Caco-2 (cell line): ENCODE measurements at regions of chr6 and their contacts with region 1.

Region 1: DNA sequence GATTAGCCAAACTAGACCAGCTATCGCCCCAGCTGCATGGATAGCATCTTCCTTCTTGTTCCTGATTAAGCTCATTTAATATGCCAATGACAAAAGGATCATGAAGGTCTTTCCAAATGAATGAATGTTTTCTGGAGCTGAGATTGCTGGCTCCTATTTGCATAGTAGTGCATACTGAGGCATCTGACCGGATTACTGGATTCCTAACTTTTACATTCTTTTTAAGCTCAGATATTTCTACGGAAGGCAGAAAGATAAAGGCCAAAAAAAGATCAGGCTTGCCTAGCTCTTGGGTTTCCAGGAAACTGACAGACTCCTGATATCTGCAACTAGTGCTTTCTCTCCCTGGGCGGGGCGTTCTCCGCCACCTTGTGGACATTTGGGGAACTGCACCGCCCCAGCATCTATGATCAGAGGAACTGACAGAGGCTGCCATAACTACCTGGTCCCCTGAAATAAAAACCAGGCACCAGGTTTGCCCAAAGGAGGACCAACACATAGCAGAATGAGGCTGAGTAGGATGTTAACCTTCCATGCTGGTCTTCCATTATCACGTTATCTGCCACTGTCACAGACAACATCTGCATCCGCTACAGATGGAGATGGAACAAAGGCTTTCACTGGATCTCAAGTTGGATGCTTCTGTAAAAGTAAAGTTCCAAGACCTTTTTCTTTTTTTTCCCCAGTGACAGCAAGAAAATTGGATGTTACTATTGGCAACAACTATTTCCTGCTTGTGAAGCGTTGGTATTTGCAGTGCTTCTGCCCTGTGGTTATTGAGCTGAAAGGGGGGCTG is 33.2 kb downstream of the NT5E start:
- DNase-seq: peak; percentile 68 to 84
- H3K4me3 ChIP-seq: no peak overlapping the region
- H3K4me3 Mint-ChIP-seq: no peak overlapping the region
- H3K27ac Mint-ChIP-seq: no peak overlapping the region
- H3K4me1 ChIP-seq: peaks cover 3% of the 10 kb centered on the region; the same call in 1 of the 2 replicates
- H3K4me1 Mint-ChIP-seq: peaks cover 7% of the 10 kb centered on the region
- H3K27me3 ChIP-seq: no peaks in the 10 kb centered on the region
- H3K27me3 Mint-ChIP-seq: no peaks in the 10 kb centered on the region
- CTCF ChIP-seq: peak; percentile 98

Region 2: DNA sequence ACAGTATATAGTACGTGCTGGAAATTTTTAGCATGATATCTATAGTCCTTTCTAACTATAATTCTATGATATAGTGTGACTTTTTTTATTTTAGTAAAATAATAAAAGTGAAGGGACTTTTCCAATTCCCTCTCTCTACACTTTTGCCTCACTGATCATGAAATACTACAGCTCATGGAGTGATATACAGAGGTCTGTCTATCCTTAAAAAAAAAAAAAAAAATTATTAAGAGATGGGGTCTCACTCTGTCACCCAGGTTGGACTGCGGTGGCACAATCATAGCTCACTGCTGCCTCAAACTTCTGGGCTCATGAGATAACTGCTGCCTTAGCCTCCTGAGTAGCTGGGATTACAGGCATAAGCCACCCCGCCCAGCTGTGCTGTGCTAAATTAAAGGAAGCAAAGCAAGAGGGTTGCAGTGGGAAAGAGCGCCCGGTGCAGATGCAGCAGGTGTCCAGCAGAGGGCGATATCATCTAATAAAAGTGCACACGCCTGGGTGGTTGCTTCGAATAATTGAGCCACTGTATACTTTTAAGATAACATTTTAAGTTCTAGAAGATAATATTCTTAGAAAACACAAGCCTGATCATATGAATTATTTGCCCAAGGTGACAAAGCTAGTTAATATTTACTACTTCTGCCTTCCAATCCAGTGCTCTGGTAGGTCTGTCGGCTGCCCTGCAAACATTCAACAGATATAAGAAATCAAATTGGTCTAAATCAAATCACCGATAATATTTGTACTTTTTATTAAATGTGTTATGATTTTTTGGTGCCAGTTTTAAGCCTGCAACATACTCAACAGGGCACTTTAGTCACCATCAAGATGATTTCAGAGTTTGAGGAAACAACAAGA is 128.1 kb before region 1 on chr6:
- CTCF ChIA-PET with region 1: interaction called, 28 read pairs
- POLR2A ChIA-PET with region 1: no interaction called
- intact Hi-C with region 1: loop called (anchors 1 kb)
- DNase-seq: peak; percentile 62 to 74
- H3K4me3 ChIP-seq: no peak overlapping the region
- H3K4me3 Mint-ChIP-seq: no peak overlapping the region
- H3K27ac Mint-ChIP-seq: no peak overlapping the region
- H3K4me1 ChIP-seq: no peaks in the 10 kb centered on the region
- H3K4me1 Mint-ChIP-seq: no peaks in the 10 kb centered on the region
- H3K27me3 ChIP-seq: no peaks in the 10 kb centered on the region
- H3K27me3 Mint-ChIP-seq: no peaks in the 10 kb centered on the region
- CTCF ChIP-seq: peak; percentile 91 to 93

Region 3: GRCh38 chr6:85372188-85372914 is 110.8 kb before region 1 on chr6:
- CTCF ChIA-PET with region 1: interaction called, 3 read pairs
- POLR2A ChIA-PET with region 1: no interaction called
- intact Hi-C with region 1: loop called (anchors 1 kb)
- DNase-seq: no peak
- H3K4me3 ChIP-seq: no peak overlapping the region
- H3K4me3 Mint-ChIP-seq: no peak overlapping the region
- H3K27ac Mint-ChIP-seq: no peak overlapping the region
- H3K4me1 ChIP-seq: no peaks in the 10 kb centered on the region
- H3K4me1 Mint-ChIP-seq: no peaks in the 10 kb centered on the region
- H3K27me3 ChIP-seq: no peaks in the 10 kb centered on the region
- H3K27me3 Mint-ChIP-seq: no peaks in the 10 kb centered on the region
- CTCF ChIP-seq: peak in 1 of 2 experiments; percentile 30

Region 4: GRCh38 chr6:85404502-85405174 is 78.5 kb before region 1 on chr6:
- CTCF ChIA-PET with region 1: interaction called, 12 read pairs
- POLR2A ChIA-PET with region 1: no interaction called
- intact Hi-C with region 1: loop called (anchors 5 kb)
- DNase-seq: peak in 1 of 2 experiments; percentile 17
- H3K4me3 ChIP-seq: no peak overlapping the region
- H3K4me3 Mint-ChIP-seq: peak overlapping the region; percentile 68
- H3K27ac Mint-ChIP-seq: peak overlapping the region; percentile 95
- H3K4me1 ChIP-seq: peaks cover 54% of the 10 kb centered on the region
- H3K4me1 Mint-ChIP-seq: peaks cover 47% of the 10 kb centered on the region
- H3K27me3 ChIP-seq: no peaks in the 10 kb centered on the region
- H3K27me3 Mint-ChIP-seq: no peaks in the 10 kb centered on the region
- CTCF ChIP-seq: no peak

Region 5: GRCh38 chr6:85449818-85450759 is 33.0 kb before region 1 on chr6 and contains the start of gene NT5E:
- CTCF ChIA-PET with region 1: interaction called, 12 read pairs
- POLR2A ChIA-PET with region 1: no interaction called
- intact Hi-C with region 1: no loop called
- DNase-seq: peak; percentile 53 to 71
- H3K4me3 ChIP-seq: peak within 1 kb of the TSS; percentile 61
- H3K4me3 Mint-ChIP-seq: peak within 1 kb of the TSS; percentile 85
- H3K27ac Mint-ChIP-seq: no peak within 1 kb of the TSS
- H3K4me1 ChIP-seq: no peaks in the 10 kb centered on the region
- H3K4me1 Mint-ChIP-seq: peaks cover 17% of the 10 kb centered on the region
- H3K27me3 ChIP-seq: no peaks in the 10 kb centered on the region
- H3K27me3 Mint-ChIP-seq: peaks cover 7% of the 10 kb centered on the region
- CTCF ChIP-seq: peak in 1 of 2 experiments; percentile 1
- total RNA-seq, gene NT5E: 1.0 and 1.5 TPM in 2 replicates

Region 6: DNA sequence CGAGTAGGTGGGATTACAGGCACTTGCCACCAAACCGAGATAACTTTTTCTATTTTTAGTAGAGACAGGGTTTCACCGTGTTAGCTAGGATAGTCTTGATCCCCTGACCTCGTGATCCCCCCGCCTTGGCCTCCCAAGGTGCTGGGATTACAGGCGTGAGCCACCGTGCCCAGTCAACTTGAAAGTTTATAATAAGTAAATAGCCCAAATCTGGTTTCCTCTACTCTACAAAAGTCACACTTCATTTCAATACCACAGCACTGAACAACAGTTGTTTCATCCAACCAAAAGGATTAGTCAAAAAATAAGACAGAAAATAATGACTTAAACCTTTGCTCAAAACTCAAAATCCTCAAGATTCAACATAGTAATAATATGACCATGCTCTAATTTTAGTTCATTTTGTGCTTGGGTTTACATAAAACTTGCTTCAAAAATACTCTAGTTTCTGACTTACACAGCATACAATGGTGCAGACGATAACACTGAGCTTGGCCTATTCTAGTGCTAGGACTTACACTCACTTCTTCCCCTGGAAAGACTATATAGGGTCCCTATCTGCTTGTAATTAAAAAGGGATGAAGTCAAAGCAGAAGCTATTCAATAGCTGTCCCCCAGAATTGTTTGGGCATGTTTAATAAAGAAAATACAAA is 23.5 kb after region 1 on chr6:
- CTCF ChIA-PET with region 1: no interaction called
- POLR2A ChIA-PET with region 1: no interaction called
- intact Hi-C with region 1: no loop called
- DNase-seq: no peak
- H3K4me3 ChIP-seq: no peak overlapping the region
- H3K4me3 Mint-ChIP-seq: no peak overlapping the region
- H3K27ac Mint-ChIP-seq: no peak overlapping the region
- H3K4me1 ChIP-seq: no peaks in the 10 kb centered on the region
- H3K4me1 Mint-ChIP-seq: no peaks in the 10 kb centered on the region
- H3K27me3 ChIP-seq: no peaks in the 10 kb centered on the region
- H3K27me3 Mint-ChIP-seq: no peaks in the 10 kb centered on the region
- CTCF ChIP-seq: no peak

Region 7: GRCh38 chr6:85537055-85537494 is 54.0 kb after region 1 on chr6:
- CTCF ChIA-PET with region 1: no interaction called
- POLR2A ChIA-PET with region 1: no interaction called
- intact Hi-C with region 1: loop called (anchors 5 kb)
- DNase-seq: no peak
- H3K4me3 ChIP-seq: no peak overlapping the region
- H3K4me3 Mint-ChIP-seq: no peak overlapping the region
- H3K27ac Mint-ChIP-seq: no peak overlapping the region
- H3K4me1 ChIP-seq: no peaks in the 10 kb centered on the region
- H3K4me1 Mint-ChIP-seq: no peaks in the 10 kb centered on the region
- H3K27me3 ChIP-seq: no peaks in the 10 kb centered on the region
- H3K27me3 Mint-ChIP-seq: no peaks in the 10 kb centered on the region
- CTCF ChIP-seq: peak; percentile 26 to 39

Region 8: GRCh38 chr6:86118271-86118670 is 635.2 kb after region 1 on chr6:
- CTCF ChIA-PET with region 1: no interaction called
- POLR2A ChIA-PET with region 1: no interaction called
- intact Hi-C with region 1: no loop called
- DNase-seq: no peak
- H3K4me3 ChIP-seq: no peak overlapping the region
- H3K4me3 Mint-ChIP-seq: no peak overlapping the region
- H3K27ac Mint-ChIP-seq: no peak overlapping the region
- H3K4me1 ChIP-seq: no peaks in the 10 kb centered on the region
- H3K4me1 Mint-ChIP-seq: no peaks in the 10 kb centered on the region
- H3K27me3 ChIP-seq: no peaks in the 10 kb centered on the region
- H3K27me3 Mint-ChIP-seq: no peaks in the 10 kb centered on the region
- CTCF ChIP-seq: no peak